Esophagus muscularis mucosa (tissue), 4 donors: ENCODE measurements at regions of chr10 and their contacts with region 1.

Region 1: DNA sequence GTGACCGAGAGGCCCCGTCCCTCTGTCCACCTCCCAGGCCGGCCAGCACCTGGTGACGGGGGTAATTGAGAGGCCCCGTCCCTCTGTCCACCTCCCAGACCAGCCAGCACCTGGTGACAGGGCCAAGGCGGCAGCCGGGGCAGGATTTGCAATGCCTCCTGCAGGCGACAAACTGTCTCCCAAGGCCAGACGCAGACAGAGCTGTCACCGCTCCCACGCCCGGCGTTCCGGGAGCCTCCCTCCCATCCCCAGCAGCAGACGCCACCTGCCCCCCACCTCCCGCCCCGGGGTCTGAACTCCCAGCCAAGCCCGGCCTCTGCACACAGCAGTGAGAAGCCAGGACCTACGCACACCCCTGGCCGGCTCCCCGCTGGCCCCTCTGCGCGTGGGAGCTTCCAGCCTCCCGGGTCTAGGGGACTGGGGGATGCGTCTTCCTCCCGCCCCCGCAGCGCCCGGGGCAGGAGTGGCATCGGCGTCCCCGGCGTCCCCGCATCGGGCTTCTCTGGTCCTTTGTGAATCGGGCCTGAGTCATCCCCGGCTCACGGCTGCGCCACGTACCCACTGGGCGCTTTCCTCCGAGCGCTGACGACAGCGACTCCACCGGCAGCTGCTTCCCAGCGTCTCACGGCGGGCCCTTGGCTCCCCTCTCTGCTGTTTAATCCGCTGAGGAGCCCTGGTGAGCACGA is 95.1 kb upstream of the DIP2C start:
- DNase-seq: peak; percentile 92
- H3K4me3 ChIP-seq: peak overlapping the region; percentile 51 to 60 (median 54)
- H3K27ac ChIP-seq: peak overlapping the region in 2 of 4 donors; percentile 33 to 60
- H3K4me1 ChIP-seq: peaks cover 13 to 28% (median 21%) of the 10 kb centered on the region in 4 donors
- H3K27me3 ChIP-seq: peaks cover 0 to 3% (median 0%) of the 10 kb centered on the region in 4 donors
- CTCF ChIP-seq: peak in 1 of 3 experiments; percentile 17
- EP300 ChIP-seq: no peak
- POLR2A ChIP-seq: no peak

Region 2: GRCh38 chr10:588241-589165 is 196.0 kb before region 1 on chr10:
- intact Hi-C with region 1: loop called (anchors 5 kb)
- DNase-seq: no peak
- H3K4me3 ChIP-seq: no peak overlapping the region
- H3K27ac ChIP-seq: peak overlapping the region in 1 of 4 donors; percentile 33
- H3K4me1 ChIP-seq: peaks cover 30 to 67% (median 47%) of the 10 kb centered on the region in 4 donors
- H3K27me3 ChIP-seq: no peaks in the 10 kb centered on the region
- CTCF ChIP-seq: peak; percentile 22 to 33 (median 31)
- EP300 ChIP-seq: no peak
- POLR2A ChIP-seq: no peak

Region 3: DNA sequence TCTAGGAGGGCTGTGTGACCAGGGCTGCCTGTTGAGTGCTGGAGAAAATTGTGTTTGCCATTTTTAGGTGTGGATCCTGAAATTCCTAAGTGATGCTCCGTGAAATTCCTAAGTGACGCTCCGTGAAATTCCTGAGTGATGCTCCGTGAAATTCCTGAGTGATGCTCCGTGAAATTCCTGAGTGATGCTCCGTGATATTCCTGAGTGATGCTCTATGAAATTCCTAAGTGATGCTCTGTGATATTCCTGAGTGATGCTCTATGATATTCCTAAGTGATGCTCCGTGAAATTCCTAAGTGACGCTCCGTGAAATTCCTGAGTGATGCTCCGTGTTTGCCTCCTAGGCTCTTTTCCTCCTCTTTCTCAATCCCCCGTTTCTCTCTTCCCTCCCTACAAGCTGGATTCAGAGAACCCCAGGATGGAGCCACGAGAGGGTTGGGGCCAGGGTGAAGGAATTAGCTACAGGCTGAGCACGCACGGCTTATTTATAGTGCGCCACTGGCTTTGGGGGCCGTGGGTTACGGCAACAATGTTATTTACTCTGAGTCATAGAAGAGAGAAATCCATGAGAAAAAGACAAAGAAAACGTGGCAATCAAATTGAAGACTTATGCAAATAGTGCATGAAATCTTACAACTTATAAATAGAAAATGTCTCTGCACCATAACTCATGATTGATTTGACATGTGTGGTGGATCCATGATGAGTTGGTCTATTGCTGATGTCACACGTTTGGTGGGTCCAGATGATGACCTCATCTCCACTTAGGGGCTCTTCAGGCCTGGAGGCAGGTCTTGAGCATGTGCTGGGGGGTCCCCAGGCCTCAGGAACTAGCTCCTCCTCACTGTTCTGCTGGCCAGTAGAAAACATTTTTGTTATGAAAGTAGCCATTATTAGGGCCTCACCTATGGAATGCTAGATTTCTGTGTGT is 496.2 kb after region 1 on chr10:
- intact Hi-C with region 1: no loop called
- DNase-seq: no peak
- H3K4me3 ChIP-seq: no peak overlapping the region
- H3K27ac ChIP-seq: no peak overlapping the region
- H3K4me1 ChIP-seq: no peaks in the 10 kb centered on the region
- H3K27me3 ChIP-seq: peaks cover 0 to 10% (median 0%) of the 10 kb centered on the region in 4 donors
- CTCF ChIP-seq: no peak
- EP300 ChIP-seq: no peak
- POLR2A ChIP-seq: no peak